CD8-positive, alpha-beta memory T cell (primary cell): ENCODE measurements at regions of chr19 and their contacts with region 1.

Region 1: DNA sequence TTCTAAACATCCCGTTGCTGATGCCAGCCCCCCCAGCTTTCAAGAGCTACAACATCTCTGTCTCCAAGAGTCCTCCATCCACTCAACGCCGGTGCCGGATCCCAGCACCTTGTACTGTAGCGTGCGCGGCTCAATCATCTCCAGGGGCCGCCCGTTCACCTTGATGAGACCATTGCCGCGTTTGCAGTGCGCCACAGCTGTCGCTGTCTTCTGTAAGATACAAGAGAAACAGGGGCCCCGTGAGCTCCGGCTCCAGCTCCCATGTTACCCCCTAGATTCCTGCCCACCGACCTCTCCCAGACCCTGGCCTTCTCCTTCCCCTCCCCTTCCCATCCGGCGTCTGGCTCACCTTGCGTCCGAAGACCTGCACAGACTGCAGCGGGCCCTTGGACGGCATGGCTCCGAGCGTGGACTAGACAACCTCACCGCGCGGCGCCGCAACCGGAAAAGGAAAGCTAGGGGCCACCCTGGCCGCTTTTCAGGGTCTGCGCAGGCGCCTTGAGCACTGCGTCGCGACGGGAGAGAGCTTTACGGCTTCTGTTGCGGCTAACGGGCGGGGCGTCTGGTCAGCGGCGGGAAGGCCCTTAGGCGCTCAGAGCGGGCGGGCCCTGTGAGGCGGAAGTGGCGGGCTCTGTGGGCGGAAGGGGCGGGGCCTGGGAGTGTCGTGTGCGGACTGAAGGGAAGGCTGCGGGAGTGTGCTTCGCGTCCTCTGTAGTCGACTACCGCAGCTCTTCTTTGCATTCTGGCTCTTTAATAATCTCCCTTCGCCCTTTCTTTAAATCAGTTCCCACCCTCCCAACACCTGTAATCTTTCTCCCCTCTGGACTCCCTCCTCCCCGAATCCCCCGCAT is at the start of gene RPS16:
- DNase-seq: peak; percentile 98 to 100 (median 98)
- H3K4me3 ChIP-seq: peak within 1 kb of the TSS; percentile 91
- H3K4me3 Mint-ChIP-seq: peak within 1 kb of the TSS; percentile 97 to 100 (median 99)
- H3K27ac ChIP-seq: peak within 1 kb of the TSS; percentile 96
- H3K27ac Mint-ChIP-seq: peak within 1 kb of the TSS; percentile 96 to 100 (median 99)
- H3K4me1 ChIP-seq: peaks cover 28% of the 10 kb centered on the region
- H3K4me1 Mint-ChIP-seq: peaks cover 38 to 58% (median 39%) of the 10 kb centered on the region in 3 donors
- H3K27me3 ChIP-seq: no peaks in the 10 kb centered on the region
- H3K27me3 Mint-ChIP-seq: peaks cover 0 to 10% of the 10 kb centered on the region in 2 donors
- total RNA-seq, gene RPS16: 2,654 to 2,668 TPM

Region 2: DNA sequence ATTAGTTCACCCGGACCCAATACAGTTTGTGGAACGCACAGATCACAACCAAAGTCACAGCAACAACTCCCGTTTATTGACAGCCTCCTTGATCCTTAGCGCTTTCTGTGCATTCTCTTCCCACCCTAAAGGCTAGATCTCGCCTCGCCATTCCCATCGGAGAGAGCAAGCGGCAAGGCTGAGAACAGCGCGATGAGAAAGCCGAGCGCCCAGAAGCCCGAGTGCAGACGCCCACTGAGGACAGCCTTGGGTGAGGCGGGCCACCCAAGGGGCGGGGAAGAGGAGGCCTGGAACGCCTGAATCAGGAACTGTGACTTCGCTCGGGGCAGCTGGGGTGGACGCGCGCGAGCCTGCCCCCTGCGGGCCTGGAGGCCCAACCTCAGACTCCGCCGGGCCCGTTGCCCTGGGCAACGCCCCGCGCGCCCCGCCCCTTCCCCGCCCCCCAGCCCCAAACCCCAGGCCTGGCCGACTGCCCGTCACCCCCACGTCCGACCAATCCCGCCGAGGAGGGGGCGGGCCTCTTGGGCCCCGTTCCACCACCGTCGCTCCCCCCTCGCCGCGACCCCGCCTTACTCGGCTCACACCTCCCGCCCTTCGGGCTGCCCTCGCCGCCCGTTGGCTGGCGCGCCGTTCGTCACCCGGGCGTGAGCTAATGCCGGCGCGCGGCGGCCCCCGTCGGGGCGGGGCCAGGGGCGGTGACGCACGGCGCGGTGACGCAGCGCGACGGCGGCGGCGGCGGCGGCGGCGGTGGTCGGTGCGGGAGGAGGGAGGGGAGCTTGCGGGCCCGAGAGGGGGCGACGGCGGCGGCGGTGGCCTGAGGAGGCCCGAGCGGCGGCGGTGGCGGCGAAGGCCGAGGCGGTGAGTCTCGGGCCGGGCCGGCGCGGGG is 93.8 kb before region 1 on chr19 and contains the start of gene SAMD4B:
- CTCF ChIA-PET with region 1: interaction called, 6 read pairs
- POLR2A ChIA-PET with region 1: interaction called, 15 read pairs
- DNase-seq: peak; percentile 99 to 100 (median 100)
- H3K4me3 ChIP-seq: peak within 1 kb of the TSS; percentile 97
- H3K4me3 Mint-ChIP-seq: peak within 1 kb of the TSS; percentile 89 to 99 (median 95)
- H3K27ac ChIP-seq: peak within 1 kb of the TSS; percentile 86
- H3K27ac Mint-ChIP-seq: peak within 1 kb of the TSS; percentile 90 to 99 (median 94)
- H3K4me1 ChIP-seq: peaks cover 57% of the 10 kb centered on the region
- H3K4me1 Mint-ChIP-seq: peaks cover 55 to 75% (median 74%) of the 10 kb centered on the region in 3 donors
- H3K27me3 ChIP-seq: no peaks in the 10 kb centered on the region
- H3K27me3 Mint-ChIP-seq: peaks cover 0 to 1% of the 10 kb centered on the region in 2 donors
- total RNA-seq, gene SAMD4B: 54.3 to 55.6 TPM

Region 3: GRCh38 chr19:39397360-39398296 is 38.1 kb before region 1 on chr19:
- CTCF ChIA-PET with region 1: interaction called, 14 read pairs
- POLR2A ChIA-PET with region 1: interaction called, 15 read pairs
- DNase-seq: peak; percentile 87 to 94 (median 92)
- H3K4me3 ChIP-seq: peak overlapping the region; percentile 68
- H3K4me3 Mint-ChIP-seq: peak overlapping the region; percentile 70 to 89 (median 79)
- H3K27ac ChIP-seq: peak overlapping the region; percentile 45
- H3K27ac Mint-ChIP-seq: peak overlapping the region; percentile 91 to 100 (median 97)
- H3K4me1 ChIP-seq: peaks cover 54% of the 10 kb centered on the region
- H3K4me1 Mint-ChIP-seq: peaks cover 41 to 67% (median 54%) of the 10 kb centered on the region in 3 donors
- H3K27me3 ChIP-seq: no peaks in the 10 kb centered on the region
- H3K27me3 Mint-ChIP-seq: no peaks in the 10 kb centered on the region

Region 4: DNA sequence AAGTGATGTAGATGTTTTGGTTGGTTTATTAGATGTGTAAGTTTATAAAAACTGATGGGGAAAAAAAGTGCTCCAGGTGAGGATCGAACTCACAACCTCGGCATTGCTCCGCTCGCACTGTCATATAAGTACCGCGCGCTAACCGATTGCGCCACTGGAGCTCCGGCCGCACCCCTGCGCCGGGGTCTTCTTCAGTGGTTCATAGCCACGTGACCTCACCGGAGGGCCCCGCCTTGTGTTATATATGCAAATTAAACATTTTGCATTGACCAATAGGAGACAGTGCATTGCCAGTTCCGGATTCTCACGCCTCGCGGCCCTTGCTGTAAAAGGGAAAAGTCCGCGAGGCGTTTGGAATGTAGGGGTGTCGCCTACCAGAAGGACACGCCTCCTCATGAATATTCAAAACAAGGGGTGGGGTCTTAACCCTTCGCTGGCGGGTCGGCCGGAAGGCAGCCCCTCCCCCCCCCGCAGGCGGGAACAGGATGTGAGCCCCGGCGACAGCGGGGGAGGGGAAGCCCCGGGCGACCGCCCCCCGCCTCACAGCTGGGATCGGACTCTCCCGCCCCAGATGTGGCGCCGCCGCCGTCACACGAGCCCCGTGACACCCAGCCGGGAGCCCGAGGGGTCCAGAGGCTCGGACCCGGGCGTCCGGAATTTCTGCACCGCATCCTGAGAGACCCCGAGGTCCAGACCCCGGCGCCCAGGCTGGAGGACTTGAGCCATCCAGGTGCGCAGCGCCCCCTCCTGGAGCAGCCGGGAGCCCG is 23.4 kb before region 1 on chr19 and contains the start of gene PLEKHG2:
- CTCF ChIA-PET with region 1: interaction called, 25 read pairs
- POLR2A ChIA-PET with region 1: interaction called, 19 read pairs
- DNase-seq: peak; percentile 93 to 99 (median 97)
- H3K4me3 ChIP-seq: peak within 1 kb of the TSS; percentile 93
- H3K4me3 Mint-ChIP-seq: peak within 1 kb of the TSS; percentile 89 to 96 (median 92)
- H3K27ac ChIP-seq: peak within 1 kb of the TSS; percentile 97
- H3K27ac Mint-ChIP-seq: peak within 1 kb of the TSS; percentile 96 to 100 (median 98)
- H3K4me1 ChIP-seq: peaks cover 28% of the 10 kb centered on the region
- H3K4me1 Mint-ChIP-seq: peaks cover 39 to 50% (median 46%) of the 10 kb centered on the region in 3 donors
- H3K27me3 ChIP-seq: no peaks in the 10 kb centered on the region
- H3K27me3 Mint-ChIP-seq: peaks cover 0 to 32% of the 10 kb centered on the region in 2 donors
- total RNA-seq, gene PLEKHG2: 35.2 to 36.4 TPM